ENCODE measurements at regions of chr12 and their contacts with region 1.

Region 1: DNA sequence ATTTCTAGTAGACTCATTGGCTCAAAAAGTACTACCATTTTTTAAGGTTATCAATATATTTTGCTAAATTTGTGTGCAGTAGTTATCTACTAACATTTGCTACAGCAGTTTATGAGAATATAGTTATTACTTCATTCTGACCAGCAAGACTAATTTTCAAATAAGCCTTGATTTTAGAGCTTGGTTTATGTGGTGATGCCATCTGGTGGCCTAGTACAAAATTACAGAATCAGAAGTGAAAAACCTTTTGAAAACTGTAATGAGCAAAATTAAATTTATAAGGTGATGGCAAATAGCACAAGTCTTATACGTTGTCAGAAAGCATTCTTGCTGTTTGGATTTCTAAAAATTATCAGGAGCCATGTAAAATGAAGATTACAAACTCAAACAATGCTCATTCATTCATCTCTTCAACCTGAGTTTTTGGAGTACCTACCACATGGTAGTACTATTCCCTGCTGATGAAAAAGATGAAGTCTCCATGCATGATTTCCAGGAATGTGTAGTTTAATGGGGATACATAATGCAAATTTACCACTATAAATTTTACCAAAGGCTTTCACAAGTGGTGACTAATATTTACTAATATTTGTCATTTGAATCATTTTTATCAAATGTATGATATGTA is 51.0 kb downstream of the MAGOHB start:
- DNase-seq: no peak
- ATAC-seq: no peak

Region 2: GRCh38 chr12:9883175-9883574 is 679.2 kb before region 1 on chr12:
- intact Hi-C with region 1: no loop called
- DNase-seq: no peak
- ATAC-seq: no peak

Region 3: GRCh38 chr12:10235761-10236631 is 326.4 kb before region 1 on chr12:
- intact Hi-C with region 1: loop called (anchors 10 kb)
- DNase-seq: no peak
- ATAC-seq: peak; percentile 78

Region 4: DNA sequence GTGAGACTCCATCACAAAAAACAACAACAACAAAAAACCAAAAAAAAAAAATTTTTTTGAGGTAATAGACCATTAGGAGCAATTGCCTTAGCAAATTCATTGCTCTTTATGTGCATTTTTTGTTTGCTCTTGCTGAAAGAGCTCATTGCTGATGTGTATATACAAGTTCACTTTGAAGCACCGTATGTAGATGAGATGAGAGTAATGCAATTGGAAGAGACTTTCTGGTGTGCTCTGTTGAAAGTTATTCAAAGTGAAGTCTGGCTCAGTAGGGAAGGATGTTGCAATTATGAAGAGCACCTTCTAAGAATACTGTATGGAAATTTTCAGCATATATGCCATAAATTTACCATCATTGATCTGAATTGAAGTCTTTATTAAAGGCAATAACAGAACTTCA is 301.5 kb before region 1 on chr12:
- intact Hi-C with region 1: no loop called
- DNase-seq: no peak
- ATAC-seq: no peak

Region 5: GRCh38 chr12:10320643-10321042 is 241.8 kb before region 1 on chr12:
- intact Hi-C with region 1: loop called (anchors 10 kb)
- DNase-seq: no peak
- ATAC-seq: no peak

Region 6: DNA sequence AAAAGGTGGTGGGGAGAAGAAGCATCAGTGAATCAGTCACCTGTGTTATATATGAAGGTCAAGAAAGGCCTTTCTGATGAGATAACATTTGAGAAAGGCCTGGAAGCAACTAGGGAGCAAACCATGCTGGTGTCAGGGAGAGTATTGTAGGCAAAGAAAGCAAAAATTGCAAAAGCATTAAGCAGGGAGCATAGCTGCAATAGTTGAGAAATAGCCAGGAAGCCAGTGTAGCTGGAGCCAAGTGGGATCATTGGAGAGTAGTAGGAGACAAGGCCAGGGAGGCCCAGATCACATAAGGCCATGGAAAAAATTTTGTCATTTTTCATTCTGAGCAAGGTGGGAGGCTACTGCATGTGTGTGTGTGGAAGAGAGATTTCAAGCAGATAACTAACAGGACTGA is 69.8 kb after region 1 on chr12:
- intact Hi-C with region 1: no loop called
- DNase-seq: no peak
- ATAC-seq: no peak

Measured in sciatic nerve (tissue), 2 donors.